ENCODE measurements at regions of chr13 and their contacts with region 1.

Region 1: GRCh38 chr13:48790966-48791365 is 137.2 kb downstream of the CYSLTR2 start:
- DNase-seq: no peak
- H3K4me3 ChIP-seq: no peak overlapping the region
- H3K27ac ChIP-seq: peak overlapping the region; percentile 73
- H3K27me3 ChIP-seq: no peaks in the 10 kb centered on the region
- CTCF ChIP-seq: no peak

Region 2: DNA sequence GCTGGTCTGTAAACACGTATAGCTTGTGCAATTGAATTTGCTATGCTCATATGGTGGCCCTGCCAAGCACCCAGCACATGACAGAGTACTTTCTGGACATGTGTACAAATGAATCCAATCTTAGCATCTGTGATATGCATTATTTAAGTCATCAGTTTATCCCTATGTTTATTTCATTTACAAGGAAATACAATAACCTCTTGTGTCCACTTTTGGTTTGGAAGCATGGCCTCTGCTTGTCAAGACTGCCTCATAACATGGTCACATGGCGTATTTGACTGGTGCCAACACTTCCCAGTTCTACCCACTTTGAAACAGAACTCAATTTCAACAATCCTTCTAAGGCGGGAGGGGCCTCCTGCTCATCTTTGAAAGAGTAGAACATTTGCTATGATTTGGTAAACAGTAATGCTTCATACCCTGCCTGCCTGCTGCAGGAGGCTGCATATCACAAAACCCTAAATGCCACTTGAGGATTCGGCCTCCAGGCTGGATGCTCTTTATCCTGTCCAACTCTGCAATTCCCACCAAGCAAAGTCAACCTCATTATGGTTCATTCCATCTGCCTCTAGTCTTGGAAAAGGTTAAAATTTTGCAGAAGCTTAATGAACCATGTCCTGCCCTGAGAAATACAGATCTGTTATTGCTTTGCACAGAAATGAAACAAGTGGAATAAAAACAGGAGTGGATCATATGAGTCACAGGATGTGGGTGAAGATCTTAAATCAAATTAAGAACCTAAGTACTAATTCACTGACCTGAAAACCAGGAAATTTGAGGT is 14.0 kb after region 1 on chr13:
- CTCF ChIA-PET with region 1: no interaction called
- POLR2A ChIA-PET with region 1: no interaction called
- DNase-seq: no peak
- H3K4me3 ChIP-seq: no peak overlapping the region
- H3K27ac ChIP-seq: no peak overlapping the region
- H3K27me3 ChIP-seq: no peaks in the 10 kb centered on the region
- CTCF ChIP-seq: no peak

Region 3: DNA sequence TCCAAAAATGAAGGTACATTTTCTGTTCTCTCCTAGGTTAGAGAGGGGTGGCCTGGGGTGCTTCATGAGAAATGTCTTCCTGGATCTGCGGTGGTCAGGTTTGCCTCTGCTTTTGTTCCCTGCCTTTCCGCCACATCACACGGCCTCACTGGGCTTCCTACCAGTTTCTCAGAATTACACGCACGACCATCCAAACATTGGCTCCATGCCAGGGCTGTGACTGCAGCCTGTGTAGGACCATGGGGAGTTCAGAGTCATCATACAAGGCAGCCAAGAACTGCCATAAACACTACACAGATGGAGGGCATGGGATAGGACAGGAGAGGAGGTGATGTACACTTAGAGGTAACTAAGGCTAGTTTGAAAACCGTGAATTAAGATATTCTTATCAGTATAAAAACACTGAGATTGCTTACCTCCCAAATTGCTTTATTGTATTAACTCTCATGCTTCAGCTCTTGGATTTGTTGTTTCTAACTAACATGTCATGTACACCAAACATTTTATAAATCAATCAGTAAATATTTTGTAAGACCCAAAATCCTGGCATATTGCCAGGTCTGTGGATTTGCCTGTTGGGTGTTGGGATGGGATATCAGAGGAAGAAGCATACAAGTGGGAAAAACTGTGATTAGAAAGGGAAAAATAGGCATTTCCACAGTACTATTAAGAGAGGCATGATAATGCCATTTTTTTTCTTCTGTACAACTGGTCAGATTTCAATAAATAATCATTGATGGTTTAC is 501.9 kb after region 1 on chr13:
- CTCF ChIA-PET with region 1: no interaction called
- POLR2A ChIA-PET with region 1: interaction called, 10 read pairs
- DNase-seq: peak; percentile 77
- H3K4me3 ChIP-seq: no peak overlapping the region
- H3K27ac ChIP-seq: no peak overlapping the region
- H3K27me3 ChIP-seq: no peaks in the 10 kb centered on the region
- CTCF ChIP-seq: no peak